Aorta (tissue), 5 donors: ENCODE measurements at regions of chr13 and their contacts with region 1.

Region 1: GRCh38 chr13:106567474-106568298 is at the start of gene ARGLU1:
- DNase-seq: peak; percentile 96 to 99
- ATAC-seq: peak; percentile 98
- H3K4me3 ChIP-seq: peak within 1 kb of the TSS; percentile 88 to 90
- H3K27ac ChIP-seq: peak within 1 kb of the TSS; percentile 58 to 93
- H3K4me1 ChIP-seq: peaks cover 0 to 12% of the 10 kb centered on the region in 2 donors
- H3K27me3 ChIP-seq: no peaks in the 10 kb centered on the region
- total RNA-seq, gene ARGLU1: 108 to 142 TPM

Region 2: DNA sequence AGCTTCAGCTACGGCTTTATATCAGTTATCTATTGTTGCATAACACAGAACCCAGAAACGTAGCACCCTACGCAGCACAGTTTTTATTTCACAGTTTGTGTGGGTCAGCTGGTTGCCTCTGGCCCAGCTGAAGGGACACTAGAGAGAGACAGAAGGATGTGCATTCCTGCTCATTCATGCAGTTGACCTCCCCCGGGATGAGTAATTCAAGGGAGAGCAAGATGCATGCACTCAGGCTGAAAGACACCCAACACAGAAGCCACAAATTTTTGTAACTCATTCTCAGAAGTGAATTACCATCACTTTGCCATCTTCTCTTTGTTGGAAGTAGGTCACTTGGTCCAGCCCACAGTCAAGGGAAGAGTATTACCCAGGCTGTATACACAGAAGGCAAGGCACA is 121.7 kb before region 1 on chr13:
- intact Hi-C with region 1: no loop called
- DNase-seq: no peak
- ATAC-seq: no peak
- H3K4me3 ChIP-seq: no peak overlapping the region
- H3K27ac ChIP-seq: no peak overlapping the region
- H3K4me1 ChIP-seq: peaks cover 0 to 8% of the 10 kb centered on the region in 2 donors
- H3K27me3 ChIP-seq: no peaks in the 10 kb centered on the region

Region 3: DNA sequence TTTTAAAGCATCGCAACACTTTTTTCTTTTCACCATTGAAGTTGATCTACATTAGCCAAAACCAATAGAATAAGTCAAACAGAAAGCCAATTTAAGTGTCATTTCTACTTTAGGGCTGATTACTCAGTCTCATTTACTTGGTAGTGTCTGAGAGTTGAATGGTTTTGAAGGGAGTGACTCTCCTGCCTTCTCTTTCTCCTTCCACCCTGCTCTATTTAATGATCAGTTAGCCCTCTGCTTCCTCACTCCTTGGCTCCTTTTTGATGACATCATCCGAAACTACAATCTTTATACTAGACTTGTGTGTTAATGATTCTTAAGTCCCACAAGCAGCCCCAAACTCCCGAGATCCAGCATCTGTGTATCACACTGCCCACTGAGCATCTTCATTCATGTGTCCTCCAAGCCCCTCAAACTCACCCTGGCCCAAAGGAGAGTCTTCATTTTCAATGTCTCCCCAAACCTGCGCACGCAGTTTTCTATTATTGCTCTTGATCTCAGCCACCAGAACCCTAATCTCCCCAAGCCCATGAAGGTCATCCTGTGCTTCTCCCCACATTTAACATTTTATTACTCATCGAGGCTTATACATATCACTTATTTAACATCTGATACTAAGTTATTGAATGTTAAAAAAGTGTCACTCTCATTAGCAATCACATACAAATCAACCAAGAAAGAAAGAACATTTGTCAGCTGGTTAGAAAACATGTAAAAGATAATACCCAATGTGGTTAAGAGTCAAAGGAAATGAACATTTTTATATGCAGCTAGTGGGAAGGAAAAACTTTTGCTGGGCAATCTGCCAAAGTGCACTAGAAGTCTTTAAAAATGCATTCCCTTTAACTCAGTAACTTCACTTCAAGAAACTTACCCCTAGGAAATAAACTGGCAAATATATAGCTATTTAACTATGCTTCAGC is 32.5 kb after region 1 on chr13:
- intact Hi-C with region 1: loop called in 1 of 2 experiments (anchors 5 kb)
- DNase-seq: no peak
- ATAC-seq: no peak
- H3K4me3 ChIP-seq: no peak overlapping the region
- H3K27ac ChIP-seq: no peak overlapping the region
- H3K4me1 ChIP-seq: peaks cover 0 to 5% of the 10 kb centered on the region in 2 donors
- H3K27me3 ChIP-seq: no peaks in the 10 kb centered on the region

Region 4: GRCh38 chr13:106619688-106620555 is 52.2 kb after region 1 on chr13:
- intact Hi-C with region 1: no loop called
- DNase-seq: no peak
- ATAC-seq: peak; percentile 91
- H3K4me3 ChIP-seq: no peak overlapping the region
- H3K27ac ChIP-seq: no peak overlapping the region
- H3K4me1 ChIP-seq: no peaks in the 10 kb centered on the region
- H3K27me3 ChIP-seq: no peaks in the 10 kb centered on the region

Region 5: GRCh38 chr13:106796280-106797047 is 228.8 kb after region 1 on chr13:
- intact Hi-C with region 1: no loop called
- DNase-seq: no peak
- ATAC-seq: no peak
- H3K4me3 ChIP-seq: no peak overlapping the region
- H3K27ac ChIP-seq: no peak overlapping the region
- H3K4me1 ChIP-seq: peaks cover 0 to 1% of the 10 kb centered on the region in 2 donors
- H3K27me3 ChIP-seq: no peaks in the 10 kb centered on the region

Region 6: GRCh38 chr13:107035778-107036177 is 468.1 kb after region 1 on chr13:
- intact Hi-C with region 1: loop called in 1 of 2 experiments (anchors 10 kb)
- DNase-seq: no peak
- ATAC-seq: no peak
- H3K4me3 ChIP-seq: no peak overlapping the region
- H3K27ac ChIP-seq: no peak overlapping the region
- H3K4me1 ChIP-seq: no peaks in the 10 kb centered on the region
- H3K27me3 ChIP-seq: no peaks in the 10 kb centered on the region